A673 (cell line): ENCODE measurements at regions of chr19 and their contacts with region 1.

Region 1: GRCh38 chr19:49949744-49950589 is 11.0 kb downstream of the SIGLEC11 start:
- DNase-seq: no peak
- H3K4me3 ChIP-seq: no peak overlapping the region
- H3K27ac ChIP-seq: no peak overlapping the region
- H3K4me1 ChIP-seq: no peaks in the 10 kb centered on the region
- H3K27me3 ChIP-seq: no peaks in the 10 kb centered on the region
- CTCF ChIP-seq: no peak

Region 2: GRCh38 chr19:50067575-50067974 is 117.6 kb after region 1 on chr19:
- CTCF ChIA-PET with region 1: no interaction called
- POLR2A ChIA-PET with region 1: interaction called, 18 read pairs
- intact Hi-C with region 1: no loop called
- DNase-seq: no peak
- H3K4me3 ChIP-seq: no peak overlapping the region
- H3K27ac ChIP-seq: no peak overlapping the region
- H3K4me1 ChIP-seq: no peaks in the 10 kb centered on the region
- H3K27me3 ChIP-seq: no peaks in the 10 kb centered on the region
- CTCF ChIP-seq: no peak